Panc1 (cell line): ENCODE measurements at regions of chr7 and their contacts with region 1.

Region 1: GRCh38 chr7:45099891-45100760 is 11.4 kb upstream of the NACAD start:
- DNase-seq: no peak
- ATAC-seq: peak; percentile 42
- H3K4me3 ChIP-seq: no peak overlapping the region
- H3K27ac ChIP-seq: no peak overlapping the region
- H3K4me1 ChIP-seq: no peaks in the 10 kb centered on the region
- H3K27me3 ChIP-seq: no peaks in the 10 kb centered on the region
- CTCF ChIP-seq: no peak

Region 2: DNA sequence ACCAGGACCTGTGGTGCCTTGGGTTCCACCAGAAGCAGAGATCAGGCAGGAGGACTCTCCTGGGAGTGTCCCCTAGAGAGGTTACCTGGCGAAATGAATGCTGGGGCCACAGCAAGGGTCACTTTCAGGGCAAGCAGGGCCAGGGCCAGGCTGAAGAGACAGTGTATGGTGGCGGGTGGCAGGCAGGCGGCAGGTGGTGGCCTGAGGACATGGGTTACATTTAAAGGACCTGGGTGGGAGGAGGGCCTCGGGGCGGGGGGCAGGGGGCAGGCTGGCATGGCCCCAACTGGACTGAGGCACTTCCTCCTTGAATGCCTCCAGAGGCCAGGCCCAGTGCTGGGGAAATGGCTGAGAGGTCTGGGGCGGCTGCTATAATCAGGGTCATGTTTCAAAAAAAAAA is 26.1 kb after region 1 on chr7:
- CTCF ChIA-PET with region 1: no interaction called
- POLR2A ChIA-PET with region 1: no interaction called
- in situ Hi-C with region 1: no loop called
- intact Hi-C with region 1: loop called (anchors 1 kb)
- DNase-seq: no peak
- ATAC-seq: no peak
- H3K4me3 ChIP-seq: no peak overlapping the region
- H3K27ac ChIP-seq: no peak overlapping the region
- H3K4me1 ChIP-seq: no peaks in the 10 kb centered on the region
- H3K27me3 ChIP-seq: no peaks in the 10 kb centered on the region
- CTCF ChIP-seq: no peak

Region 3: GRCh38 chr7:45726883-45727282 is 626.8 kb after region 1 on chr7:
- CTCF ChIA-PET with region 1: no interaction called
- POLR2A ChIA-PET with region 1: no interaction called
- in situ Hi-C with region 1: no loop called
- intact Hi-C with region 1: no loop called
- DNase-seq: no peak
- ATAC-seq: no peak
- H3K4me3 ChIP-seq: no peak overlapping the region
- H3K27ac ChIP-seq: no peak overlapping the region
- H3K4me1 ChIP-seq: no peaks in the 10 kb centered on the region
- H3K27me3 ChIP-seq: no peaks in the 10 kb centered on the region
- CTCF ChIP-seq: no peak